Heart right ventricle (tissue), 16 donors: ENCODE measurements at regions of chr11 and their contacts with region 1.

Region 1: GRCh38 chr11:105641433-105641832 is 31.6 kb downstream of the GRIA4 start:
- DNase-seq: no peak
- ATAC-seq: no peak
- H3K4me3 ChIP-seq: no peak overlapping the region
- H3K27ac ChIP-seq: no peak overlapping the region
- H3K4me1 ChIP-seq: no peaks in the 10 kb centered on the region
- H3K27me3 ChIP-seq: no peaks in the 10 kb centered on the region
- CTCF ChIP-seq: no peak

Region 2: DNA sequence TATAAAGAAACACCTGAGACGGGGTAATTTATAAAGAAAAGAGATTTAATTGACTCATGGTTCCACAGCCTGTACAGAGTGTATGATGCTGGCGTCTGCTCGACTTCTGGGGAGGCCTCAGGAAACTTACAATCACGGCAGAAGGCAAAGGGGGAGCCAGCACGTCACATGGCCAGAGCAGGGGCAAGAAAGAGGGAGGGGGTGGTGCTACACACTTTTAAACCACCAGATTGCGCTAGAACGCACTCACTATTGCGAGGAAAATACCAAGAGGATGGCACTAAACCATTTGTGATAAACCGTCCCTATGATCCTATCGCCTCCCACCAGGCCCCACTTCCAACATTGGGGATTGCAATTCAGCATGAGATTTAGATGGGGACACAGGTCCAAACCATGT is 422.2 kb before region 1 on chr11:
- intact Hi-C with region 1: loop called in 1 of 10 experiments (anchors 10 kb)
- DNase-seq: no peak
- ATAC-seq: no peak
- H3K4me3 ChIP-seq: no peak overlapping the region
- H3K27ac ChIP-seq: no peak overlapping the region
- H3K4me1 ChIP-seq: peaks cover 0 to 11% (median 0%) of the 10 kb centered on the region in 9 donors
- H3K27me3 ChIP-seq: no peaks in the 10 kb centered on the region
- CTCF ChIP-seq: no peak

Region 3: DNA sequence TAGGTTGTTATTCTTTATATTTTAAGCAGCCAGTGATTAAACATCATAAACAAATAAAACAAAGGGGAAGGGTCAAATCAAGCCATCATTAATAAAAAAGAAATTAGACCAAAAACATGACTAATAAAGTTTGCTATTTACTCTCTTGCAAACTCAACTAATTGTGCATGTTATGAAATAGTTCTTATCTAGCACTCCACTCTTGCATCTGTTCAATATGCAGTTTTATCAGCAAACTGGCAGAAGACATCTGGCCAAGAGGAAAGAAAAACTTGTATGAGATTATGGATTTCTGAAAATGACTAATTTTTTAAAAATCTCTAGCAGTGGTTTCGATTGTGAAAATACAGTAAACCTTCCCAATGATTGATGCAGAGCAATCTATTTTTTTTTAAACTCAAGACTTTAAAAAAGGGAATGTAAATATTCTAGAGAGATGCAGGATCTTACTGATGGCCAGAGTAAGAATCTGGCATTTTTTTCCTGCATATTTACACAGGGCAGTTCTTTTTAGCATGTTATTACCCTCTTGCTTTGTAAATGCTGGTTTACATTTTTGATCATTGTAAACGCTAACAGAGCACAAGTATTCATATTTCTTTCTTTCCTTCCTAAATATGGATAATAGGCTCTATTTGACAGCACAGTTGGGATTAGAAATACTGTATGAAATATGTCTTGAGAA is 51.8 kb after region 1 on chr11:
- intact Hi-C with region 1: no loop called
- DNase-seq: no peak
- ATAC-seq: no peak
- H3K4me3 ChIP-seq: no peak overlapping the region
- H3K27ac ChIP-seq: no peak overlapping the region
- H3K4me1 ChIP-seq: no peaks in the 10 kb centered on the region
- H3K27me3 ChIP-seq: no peaks in the 10 kb centered on the region
- CTCF ChIP-seq: no peak

Region 4: DNA sequence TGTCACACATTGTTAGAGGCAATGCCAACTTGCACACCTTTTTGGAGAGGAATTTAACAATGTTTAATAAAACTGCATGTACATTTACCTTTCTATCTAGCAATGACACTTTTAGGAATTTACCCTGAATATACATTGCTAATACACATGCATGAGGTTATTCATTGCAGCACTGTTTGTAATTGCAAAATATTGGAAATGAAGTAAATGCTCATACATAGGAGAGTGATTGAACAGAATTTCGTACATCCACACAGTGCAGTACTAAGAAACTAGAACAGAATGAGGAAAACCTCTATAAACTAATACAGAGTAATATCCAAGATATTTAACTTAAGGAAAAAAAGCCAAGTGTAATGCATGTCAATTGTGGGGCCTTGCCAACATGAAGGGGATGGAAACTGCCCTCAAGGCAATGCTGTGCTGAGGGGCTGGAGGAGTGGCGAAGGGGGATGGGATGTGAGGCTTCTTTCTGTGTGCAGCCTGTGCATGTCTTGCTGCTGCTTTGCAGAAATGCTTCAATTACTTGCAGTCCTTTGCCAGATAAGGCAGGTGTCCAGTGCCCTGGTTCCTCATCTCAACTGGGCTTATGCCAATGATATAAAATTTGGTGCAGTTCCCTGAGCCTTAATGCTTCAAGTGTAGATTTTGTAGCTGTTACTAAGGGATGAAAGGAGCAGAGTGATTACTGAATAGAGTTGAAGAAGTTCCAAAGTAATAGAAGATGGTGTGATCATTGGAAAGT is 64.5 kb after region 1 on chr11:
- intact Hi-C with region 1: loop called in 1 of 10 experiments (anchors 10 kb)
- DNase-seq: no peak
- ATAC-seq: no peak
- H3K4me3 ChIP-seq: no peak overlapping the region
- H3K27ac ChIP-seq: no peak overlapping the region
- H3K4me1 ChIP-seq: no peaks in the 10 kb centered on the region
- H3K27me3 ChIP-seq: no peaks in the 10 kb centered on the region
- CTCF ChIP-seq: no peak

Region 5: DNA sequence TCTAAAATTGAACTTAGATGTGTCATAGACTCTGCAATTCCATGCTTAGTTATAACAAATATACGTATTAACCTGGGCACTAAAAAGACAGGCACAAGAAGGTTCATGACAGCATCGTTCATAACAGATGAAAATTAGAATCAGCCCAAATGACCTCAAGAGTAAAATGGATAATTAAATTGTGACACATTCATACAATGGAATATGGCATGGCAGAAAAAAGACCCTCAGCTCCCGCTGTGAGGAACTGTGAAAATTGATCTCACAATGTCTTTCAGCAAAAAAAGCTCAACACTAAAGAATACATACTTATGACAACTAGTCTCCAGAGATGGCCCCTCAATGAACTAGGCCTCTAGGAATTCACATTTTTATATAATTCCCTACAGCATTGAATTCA is 990.9 kb after region 1 on chr11:
- intact Hi-C with region 1: no loop called
- DNase-seq: no peak
- ATAC-seq: no peak
- H3K4me3 ChIP-seq: no peak overlapping the region
- H3K27ac ChIP-seq: no peak overlapping the region
- H3K4me1 ChIP-seq: no peaks in the 10 kb centered on the region
- H3K27me3 ChIP-seq: no peaks in the 10 kb centered on the region
- CTCF ChIP-seq: no peak